Heart left ventricle (tissue), 16 donors: ENCODE measurements at regions of chr2 and their contacts with region 1.

Region 1: DNA sequence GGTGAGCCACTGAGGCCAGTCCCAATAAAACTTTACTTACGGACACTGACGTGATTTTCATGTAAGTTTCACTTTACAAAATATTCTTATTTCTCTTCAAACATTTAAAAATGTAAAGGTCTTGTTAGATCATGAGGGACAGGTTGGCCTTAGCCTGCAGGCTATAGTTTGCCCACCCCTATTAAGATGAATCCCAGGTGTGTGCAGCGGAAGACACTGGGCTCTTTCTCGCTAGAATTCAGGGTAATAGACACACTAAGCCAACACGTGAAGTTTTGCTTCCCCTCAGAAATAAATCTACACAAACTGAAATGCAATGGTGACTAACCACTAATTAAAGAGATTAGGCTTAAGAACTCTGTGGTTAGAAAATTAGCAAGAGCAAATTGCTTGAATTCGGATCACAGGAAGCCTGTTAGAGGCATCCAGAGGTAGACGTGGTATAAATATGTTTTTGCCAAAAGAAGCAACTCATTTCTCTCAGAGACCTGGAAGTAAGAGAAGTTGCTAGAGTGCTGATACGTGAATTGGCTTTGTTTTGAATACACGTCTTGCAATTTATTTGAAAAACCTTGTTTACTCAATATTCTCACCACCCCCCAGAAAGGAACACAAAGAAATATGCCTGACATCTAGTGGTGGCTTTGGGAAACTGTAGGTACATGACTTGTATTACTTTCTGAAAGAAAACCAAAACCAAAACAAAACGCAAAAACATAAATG is 151.6 kb downstream of the DTNB start:
- DNase-seq: peak in 2 of 5 donors; percentile 23 to 27
- ATAC-seq: peak in 3 of 4 donors; percentile 55 to 73 (median 60)
- H3K4me3 ChIP-seq: peak overlapping the region in 9 of 12 donors; percentile 16 to 44 (median 33)
- H3K27ac ChIP-seq: peak overlapping the region in 1 of 12 donors; percentile 15
- H3K4me1 ChIP-seq: peaks cover 0 to 10% (median 0%) of the 10 kb centered on the region in 12 donors
- H3K27me3 ChIP-seq: no peaks in the 10 kb centered on the region
- CTCF ChIP-seq: peak; percentile 64 to 82 (median 78)
- POLR2A ChIP-seq: no peak

Region 2: GRCh38 chr2:25252281-25253105 is 269.3 kb before region 1 on chr2:
- intact Hi-C with region 1: loop called in 1 of 10 experiments (anchors 10 kb)
- DNase-seq: peak; percentile 68 to 81 (median 78)
- ATAC-seq: peak; percentile 13 to 76 (median 58)
- H3K4me3 ChIP-seq: peak overlapping the region; percentile 38 to 74 (median 61)
- H3K27ac ChIP-seq: peak overlapping the region in 11 of 12 donors; percentile 66 to 91 (median 84)
- H3K4me1 ChIP-seq: peaks cover 0 to 38% (median 28%) of the 10 kb centered on the region in 12 donors
- H3K27me3 ChIP-seq: no peaks in the 10 kb centered on the region
- CTCF ChIP-seq: no peak
- POLR2A ChIP-seq: peak in 1 of 2 donors; percentile 12

Region 3: DNA sequence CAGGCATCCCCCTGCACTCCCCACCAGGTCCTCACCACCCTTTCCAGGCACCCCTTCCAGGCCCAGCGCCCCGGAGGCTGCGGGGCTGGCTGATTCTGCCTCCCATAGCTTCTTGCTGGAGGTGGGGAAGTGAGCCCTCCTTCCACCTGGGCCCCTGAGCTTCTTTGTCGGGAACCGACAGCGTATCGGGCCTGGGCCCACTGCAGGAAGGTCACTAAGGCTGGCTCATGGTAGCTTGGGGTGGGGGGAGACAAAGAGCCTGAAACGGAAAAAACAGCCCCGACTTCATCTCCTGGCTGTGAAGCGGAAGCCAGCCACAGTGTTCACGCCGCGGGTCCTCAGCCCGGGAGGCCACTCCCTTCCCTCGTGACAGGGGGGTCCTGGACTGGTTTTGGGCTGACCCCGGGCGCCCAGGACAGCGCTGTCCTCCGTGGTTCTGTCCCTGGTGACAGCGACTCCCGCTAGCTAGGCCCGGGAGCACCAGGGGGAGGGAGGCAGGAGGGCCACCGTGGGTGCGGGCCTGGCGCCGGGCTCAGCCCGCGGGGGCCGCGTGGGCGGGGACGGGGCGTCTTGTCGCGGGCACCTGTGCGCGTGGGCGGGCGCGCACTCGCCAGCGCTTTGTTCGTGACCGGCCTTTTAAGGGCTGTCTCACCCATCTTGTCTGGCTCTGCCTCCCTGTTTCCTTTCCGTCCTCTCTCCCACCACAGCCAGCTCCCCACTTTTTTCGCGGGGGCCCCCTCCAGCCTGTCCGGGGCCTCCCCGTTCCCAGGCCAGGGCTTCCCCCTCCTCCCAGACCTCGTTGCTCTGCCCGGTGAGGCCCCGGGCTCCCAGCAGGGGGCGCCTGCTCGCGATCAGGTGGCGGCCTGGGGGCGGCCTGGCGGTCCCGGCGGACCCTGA is 245.0 kb before region 1 on chr2:
- intact Hi-C with region 1: loop called in 1 of 10 experiments (anchors 10 kb)
- DNase-seq: peak; percentile 67 to 90 (median 72)
- ATAC-seq: peak in 3 of 4 donors; percentile 18 to 68 (median 56)
- H3K4me3 ChIP-seq: peak overlapping the region in 11 of 12 donors; percentile 14 to 59 (median 47)
- H3K27ac ChIP-seq: peak overlapping the region; percentile 66 to 94 (median 83)
- H3K4me1 ChIP-seq: peaks cover 0 to 76% (median 55%) of the 10 kb centered on the region in 12 donors
- H3K27me3 ChIP-seq: no peaks in the 10 kb centered on the region
- CTCF ChIP-seq: peak; percentile 70 to 92 (median 81)
- POLR2A ChIP-seq: no peak

Region 4: GRCh38 chr2:25342372-25343186 is 179.2 kb before region 1 on chr2:
- intact Hi-C with region 1: loop called in 4 of 10 experiments (anchors 2 to 10 kb)
- DNase-seq: peak; percentile 87 to 92 (median 87)
- ATAC-seq: peak; percentile 76 to 93 (median 88)
- H3K4me3 ChIP-seq: peak overlapping the region; percentile 31 to 99 (median 76)
- H3K27ac ChIP-seq: peak overlapping the region; percentile 47 to 95 (median 84)
- H3K4me1 ChIP-seq: peaks cover 3 to 37% (median 33%) of the 10 kb centered on the region in 12 donors
- H3K27me3 ChIP-seq: no peaks in the 10 kb centered on the region
- CTCF ChIP-seq: peak; percentile 89 to 99 (median 98)
- POLR2A ChIP-seq: peak in 1 of 2 donors; percentile 33

Region 5: DNA sequence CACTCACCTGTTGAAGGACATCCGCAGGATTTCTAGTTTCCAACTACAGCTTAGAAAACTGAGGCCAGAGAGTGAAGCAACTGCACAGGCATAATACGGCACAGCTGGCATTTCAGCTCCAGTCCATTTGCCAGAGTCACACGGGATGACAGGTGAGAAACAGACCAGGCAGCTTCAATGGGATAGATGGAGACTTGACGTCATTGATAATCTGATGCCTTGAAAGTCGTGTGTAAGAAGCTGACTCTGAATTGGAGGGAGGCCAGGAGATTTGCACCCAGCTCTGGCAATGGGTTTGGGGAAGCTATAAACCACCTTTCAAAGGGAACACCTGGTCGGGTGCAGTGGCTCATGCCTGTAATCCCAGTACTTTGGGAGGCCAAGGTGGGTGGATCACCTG is 167.7 kb before region 1 on chr2:
- intact Hi-C with region 1: loop called in 2 of 10 experiments (anchors 10 kb)
- DNase-seq: peak in 1 of 5 donors; percentile 2
- ATAC-seq: no peak
- H3K4me3 ChIP-seq: no peak overlapping the region
- H3K27ac ChIP-seq: no peak overlapping the region
- H3K4me1 ChIP-seq: no peaks in the 10 kb centered on the region
- H3K27me3 ChIP-seq: no peaks in the 10 kb centered on the region
- CTCF ChIP-seq: no peak
- POLR2A ChIP-seq: no peak

Region 6: DNA sequence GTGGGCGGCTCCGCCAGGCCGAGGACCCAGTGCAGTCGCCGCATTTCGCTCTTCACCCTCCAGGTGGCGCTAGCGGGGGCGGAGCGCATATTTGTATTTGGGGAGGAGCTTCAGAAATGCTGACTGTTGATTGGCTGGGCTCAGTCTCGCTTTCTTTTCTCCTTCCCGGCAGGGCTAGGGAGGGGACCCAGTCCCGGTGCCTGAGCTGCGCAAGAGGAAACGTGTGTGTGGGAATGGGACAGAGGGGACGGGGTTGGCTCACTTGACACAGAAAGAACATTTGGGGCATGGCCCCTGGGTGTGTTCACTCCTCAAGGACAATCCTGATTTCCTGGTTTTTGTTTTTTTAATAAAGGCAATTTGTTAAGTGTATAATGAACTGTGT is 159.8 kb before region 1 on chr2:
- intact Hi-C with region 1: loop called in 4 of 10 experiments (anchors 5 to 10 kb)
- DNase-seq: peak; percentile 91 to 95 (median 92)
- ATAC-seq: peak; percentile 98 to 100 (median 99)
- H3K4me3 ChIP-seq: peak overlapping the region in 10 of 12 donors; percentile 12 to 57 (median 44)
- H3K27ac ChIP-seq: peak overlapping the region; percentile 7 to 90 (median 70)
- H3K4me1 ChIP-seq: peaks cover 0 to 20% (median 5%) of the 10 kb centered on the region in 12 donors
- H3K27me3 ChIP-seq: no peaks in the 10 kb centered on the region
- CTCF ChIP-seq: peak; percentile 96 to 100 (median 98)
- POLR2A ChIP-seq: peak in 1 of 2 donors; percentile 74

Region 7: GRCh38 chr2:25586726-25587144 is 64.9 kb after region 1 on chr2:
- intact Hi-C with region 1: no loop called
- DNase-seq: no peak
- ATAC-seq: no peak
- H3K4me3 ChIP-seq: no peak overlapping the region
- H3K27ac ChIP-seq: no peak overlapping the region
- H3K4me1 ChIP-seq: peaks cover 0 to 40% (median 0%) of the 10 kb centered on the region in 12 donors
- H3K27me3 ChIP-seq: no peaks in the 10 kb centered on the region
- CTCF ChIP-seq: no peak
- POLR2A ChIP-seq: no peak

Region 8: GRCh38 chr2:25760297-25760696 is 238.5 kb after region 1 on chr2:
- intact Hi-C with region 1: no loop called
- DNase-seq: no peak
- ATAC-seq: no peak
- H3K4me3 ChIP-seq: no peak overlapping the region
- H3K27ac ChIP-seq: no peak overlapping the region
- H3K4me1 ChIP-seq: no peaks in the 10 kb centered on the region
- H3K27me3 ChIP-seq: no peaks in the 10 kb centered on the region
- CTCF ChIP-seq: no peak
- POLR2A ChIP-seq: no peak